ENCODE measurements at regions of chr2 and their contacts with region 1.

Region 1: DNA sequence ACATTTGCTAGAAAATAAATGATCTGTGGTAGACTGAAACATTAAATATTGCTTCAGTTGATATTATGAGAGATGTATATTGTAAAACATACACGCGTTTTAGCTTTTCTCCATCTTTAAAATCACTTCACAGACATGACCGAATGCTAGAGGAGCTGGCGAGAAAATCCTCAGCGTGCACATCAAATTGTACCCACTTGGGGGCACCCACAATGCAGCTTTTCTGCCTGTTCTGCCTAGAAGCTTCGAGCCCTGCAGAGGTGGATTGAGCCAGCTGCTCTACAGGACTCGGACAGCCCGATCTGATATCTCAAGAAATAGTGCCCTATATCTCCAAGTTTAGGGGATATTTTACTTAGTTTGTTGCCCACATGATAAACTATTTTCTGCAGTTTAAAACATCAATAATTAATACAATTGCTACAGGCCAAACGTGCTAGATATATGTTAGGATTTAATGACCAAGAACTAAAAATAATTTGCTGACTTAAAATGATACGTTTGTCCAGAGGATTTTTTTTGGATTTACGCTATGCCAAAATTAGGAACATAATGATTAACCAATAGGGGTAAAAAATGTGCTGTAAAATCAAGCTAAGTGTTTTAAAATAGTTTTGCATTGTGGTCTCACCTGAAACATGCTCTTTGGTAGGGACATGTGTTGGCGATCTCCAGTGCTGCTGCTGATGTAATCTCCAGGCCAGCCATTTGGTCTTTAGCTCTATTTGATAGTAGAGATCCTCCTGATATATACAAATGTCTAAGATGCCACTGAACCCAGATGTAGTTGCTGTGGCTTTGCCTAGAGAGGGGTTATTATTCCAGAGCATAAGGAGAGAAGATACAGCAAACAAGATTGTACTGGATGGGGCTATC is 22.3 kb upstream of the ATP5MC3 start:
- DNase-seq: peak; percentile 75
- H3K4me3 Mint-ChIP-seq: no peak overlapping the region
- H3K27ac Mint-ChIP-seq: no peak overlapping the region
- H3K4me1 Mint-ChIP-seq: no peaks in the 10 kb centered on the region
- H3K27me3 Mint-ChIP-seq: peaks cover 34% of the 10 kb centered on the region
- CTCF ChIP-seq: peak; percentile 48

Region 2: DNA sequence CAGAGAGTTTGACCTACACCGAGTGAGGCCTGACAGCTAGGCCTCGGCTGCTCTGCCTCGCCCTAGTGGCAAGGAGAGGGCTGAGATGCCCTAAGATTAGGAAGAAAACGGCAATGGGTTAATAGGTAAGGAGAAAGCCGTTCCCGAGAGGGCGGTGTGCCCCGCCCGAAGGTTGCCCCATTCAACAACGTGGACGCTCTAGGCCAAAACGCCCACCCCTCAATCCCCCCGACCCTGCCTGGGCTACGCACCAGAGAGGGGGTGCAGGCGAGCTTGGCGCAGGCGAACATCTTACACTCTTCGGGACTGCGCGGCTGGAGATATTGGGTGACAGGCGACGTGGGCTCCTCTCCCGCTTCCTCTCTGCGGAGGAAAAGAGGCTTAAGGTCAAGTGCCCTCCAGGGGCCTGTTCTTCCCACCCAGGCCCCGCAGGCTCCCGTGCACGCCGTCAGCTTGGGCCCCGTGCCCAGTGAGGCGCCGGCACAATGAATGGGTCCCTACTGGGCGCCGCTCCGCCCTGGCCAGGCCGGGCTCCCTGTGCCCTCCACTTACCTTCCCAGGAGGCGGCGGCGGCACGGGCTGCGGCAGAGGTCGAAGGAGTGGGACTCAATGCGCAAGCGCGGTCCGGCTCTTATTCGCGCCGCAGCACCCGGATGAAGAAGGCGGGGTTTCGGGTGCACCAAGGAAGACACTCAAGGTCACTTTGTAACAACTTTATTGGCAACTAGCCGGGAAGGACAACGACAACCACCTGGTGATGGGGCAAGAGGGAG is 22.6 kb before region 1 on chr2 and contains the start of gene ATP5MC3:
- CTCF ChIA-PET with region 1: interaction called, 11 read pairs
- POLR2A ChIA-PET with region 1: interaction called, 3 read pairs
- intact Hi-C with region 1: no loop called
- DNase-seq: peak; percentile 97
- H3K4me3 Mint-ChIP-seq: peak within 1 kb of the TSS; percentile 93
- H3K27ac Mint-ChIP-seq: peak within 1 kb of the TSS; percentile 96
- H3K4me1 Mint-ChIP-seq: peaks cover 19% of the 10 kb centered on the region
- H3K27me3 Mint-ChIP-seq: no peaks in the 10 kb centered on the region
- CTCF ChIP-seq: peak; percentile 18
- total RNA-seq, gene ATP5MC3: 256 and 277 TPM in 2 replicates

Region 3: DNA sequence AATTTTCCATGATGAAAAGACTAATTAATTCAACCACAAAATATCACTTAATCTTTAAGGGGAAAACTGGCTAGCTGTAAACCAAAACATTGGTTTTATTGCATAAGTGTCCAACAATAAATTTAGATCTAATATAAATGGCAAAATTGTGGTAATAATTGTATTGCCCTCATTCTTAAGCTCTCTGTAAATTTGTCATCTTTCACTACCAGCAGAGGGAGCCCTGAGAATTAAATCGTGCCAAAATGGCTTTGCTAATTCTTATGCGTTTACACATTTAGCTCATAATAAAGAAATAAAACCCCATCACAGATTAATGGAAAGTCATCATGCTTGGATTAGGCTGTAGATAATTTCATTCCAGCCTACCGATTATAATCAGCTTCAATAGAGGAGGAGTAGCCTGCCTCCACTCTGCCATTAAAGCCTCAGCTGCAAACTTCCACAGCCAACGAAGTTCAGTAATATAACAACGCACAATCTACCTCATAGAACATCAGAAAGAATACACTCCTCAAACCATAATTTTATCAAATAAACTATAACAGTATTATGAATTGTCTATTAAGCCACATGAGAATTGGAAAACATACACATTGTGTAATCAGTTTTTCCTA is 47.7 kb after region 1 on chr2:
- CTCF ChIA-PET with region 1: interaction called, 24 read pairs
- POLR2A ChIA-PET with region 1: no interaction called
- intact Hi-C with region 1: no loop called
- DNase-seq: peak; percentile 63
- H3K4me3 Mint-ChIP-seq: no peak overlapping the region
- H3K27ac Mint-ChIP-seq: no peak overlapping the region
- H3K4me1 Mint-ChIP-seq: no peaks in the 10 kb centered on the region
- H3K27me3 Mint-ChIP-seq: peaks cover 56% of the 10 kb centered on the region
- CTCF ChIP-seq: peak; percentile 48

Region 4: DNA sequence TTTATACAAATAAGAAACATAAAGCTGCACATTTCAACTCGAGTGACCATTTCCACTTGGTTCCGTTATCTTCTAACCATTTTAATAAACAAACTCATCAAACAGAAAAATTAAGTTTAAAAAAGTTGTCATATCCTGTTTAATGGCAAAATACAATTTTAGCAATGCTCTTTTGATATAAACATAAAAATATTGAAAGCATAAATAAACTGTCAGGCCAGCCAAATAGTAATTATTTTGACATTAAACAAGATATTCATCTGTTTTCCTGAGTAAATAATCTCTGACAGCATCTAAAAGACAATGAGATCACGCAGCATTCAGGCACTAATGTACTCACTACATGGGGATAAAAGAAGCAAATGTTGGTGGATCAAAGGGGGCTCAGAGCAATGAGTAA is 122.9 kb after region 1 on chr2:
- CTCF ChIA-PET with region 1: interaction called, 12 read pairs
- POLR2A ChIA-PET with region 1: no interaction called
- intact Hi-C with region 1: loop called (anchors 1 kb)
- DNase-seq: no peak
- H3K4me3 Mint-ChIP-seq: no peak overlapping the region
- H3K27ac Mint-ChIP-seq: no peak overlapping the region
- H3K4me1 Mint-ChIP-seq: no peaks in the 10 kb centered on the region
- H3K27me3 Mint-ChIP-seq: no peaks in the 10 kb centered on the region
- CTCF ChIP-seq: no peak

Measured in MCF 10A (cell line).